ENCODE measurements at regions of chr10 and their contacts with region 1.

Region 1: GRCh38 chr10:122258136-122259074 is 12.7 kb upstream of the BTBD16 start:
- DNase-seq: no peak
- H3K4me3 ChIP-seq: no peak overlapping the region
- H3K27ac ChIP-seq: peak overlapping the region; percentile 22 to 66 (median 56)
- H3K4me1 ChIP-seq: peaks cover 4 to 17% (median 13%) of the 10 kb centered on the region in 4 donors
- H3K27me3 ChIP-seq: no peaks in the 10 kb centered on the region
- CTCF ChIP-seq: no peak
- EP300 ChIP-seq: no peak
- POLR2A ChIP-seq: no peak

Region 2: GRCh38 chr10:122148876-122149560 is 109.4 kb before region 1 on chr10:
- intact Hi-C with region 1: loop called (anchors 5 kb)
- DNase-seq: no peak
- H3K4me3 ChIP-seq: peak overlapping the region in 3 of 4 donors; percentile 21 to 30 (median 22)
- H3K27ac ChIP-seq: peak overlapping the region; percentile 79 to 90 (median 86)
- H3K4me1 ChIP-seq: peaks cover 69 to 79% (median 73%) of the 10 kb centered on the region in 4 donors
- H3K27me3 ChIP-seq: no peaks in the 10 kb centered on the region
- CTCF ChIP-seq: no peak
- EP300 ChIP-seq: no peak
- POLR2A ChIP-seq: no peak

Region 3: GRCh38 chr10:122388287-122388997 is 130.0 kb after region 1 on chr10:
- intact Hi-C with region 1: no loop called
- DNase-seq: no peak
- H3K4me3 ChIP-seq: no peak overlapping the region
- H3K27ac ChIP-seq: no peak overlapping the region
- H3K4me1 ChIP-seq: peaks cover 19 to 32% (median 20%) of the 10 kb centered on the region in 4 donors
- H3K27me3 ChIP-seq: no peaks in the 10 kb centered on the region
- CTCF ChIP-seq: no peak
- EP300 ChIP-seq: no peak
- POLR2A ChIP-seq: no peak

Measured in esophagus muscularis mucosa (tissue), 4 donors.